Common myeloid progenitor, CD34-positive (primary cell): ENCODE measurements at regions of chr16 and their contacts with region 1.

Region 1: DNA sequence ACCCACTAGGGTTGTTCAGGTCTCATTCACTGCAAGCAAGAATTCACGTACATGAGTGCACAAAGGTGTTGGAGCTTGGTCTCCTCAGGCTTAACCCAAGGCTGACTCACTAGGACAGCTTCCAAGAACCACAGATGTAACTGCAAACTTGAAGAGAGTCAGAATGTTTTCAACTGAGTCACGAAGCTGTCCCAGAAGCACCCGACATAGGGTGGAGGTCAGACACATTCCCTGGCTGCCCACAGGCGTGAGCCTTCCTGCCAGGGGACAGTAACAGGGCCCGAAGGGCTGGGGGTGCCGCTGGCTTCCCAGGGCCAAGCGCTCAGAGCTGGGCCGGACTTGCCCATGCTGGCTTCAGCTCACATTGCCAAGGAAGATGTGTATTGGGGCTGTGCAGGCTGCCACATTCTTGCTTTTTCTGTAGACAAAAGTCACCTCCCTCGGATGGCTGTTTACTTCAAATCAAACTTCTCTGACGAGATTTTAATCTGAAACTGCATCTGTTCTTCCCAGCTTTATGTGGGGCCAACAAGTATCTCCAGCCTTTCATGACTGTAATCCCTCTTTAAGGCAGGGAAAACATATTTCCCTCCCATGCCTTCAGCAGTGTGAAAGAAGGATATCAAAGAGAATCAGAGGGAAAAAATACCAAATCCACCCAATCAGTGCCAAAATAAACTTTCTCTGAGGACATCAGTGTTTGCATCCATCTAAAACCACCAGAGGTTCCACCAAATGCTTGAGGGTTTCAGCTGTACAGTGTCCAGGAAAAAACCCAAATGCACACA is 14.3 kb downstream of the CMTM3 start:
- DNase-seq: no peak
- H3K4me3 ChIP-seq: no peak overlapping the region
- H3K27ac ChIP-seq: no peak overlapping the region
- H3K4me1 ChIP-seq: no peaks in the 10 kb centered on the region
- H3K27me3 ChIP-seq: no peaks in the 10 kb centered on the region

Region 2: DNA sequence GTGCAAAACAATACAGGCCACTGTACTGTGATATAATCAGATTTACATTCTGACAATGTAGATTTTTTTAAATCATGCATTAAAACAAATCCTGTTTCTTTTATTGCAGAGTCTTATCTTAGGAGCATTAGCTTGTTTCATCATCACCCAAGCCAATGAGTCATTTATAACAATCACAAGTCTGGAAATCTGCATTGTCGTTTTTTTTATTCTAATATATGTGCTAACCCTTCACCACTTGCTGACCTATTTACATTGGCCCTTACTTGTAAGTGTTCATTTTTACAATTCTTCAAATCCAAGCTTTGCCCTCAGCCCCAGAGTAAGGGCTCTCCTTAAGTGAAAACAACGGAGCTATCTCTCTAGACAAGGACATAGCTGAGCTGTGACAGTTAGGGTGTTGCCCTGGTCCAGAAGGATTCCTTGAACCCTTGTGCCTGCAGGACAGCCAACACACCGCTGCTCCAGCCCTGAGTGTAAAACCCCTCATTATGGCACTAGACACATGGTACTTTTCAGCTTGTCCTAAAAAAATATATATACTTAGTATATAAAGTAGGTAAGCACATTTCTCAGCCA is 48.9 kb before region 1 on chr16:
- CTCF ChIA-PET with region 1: no interaction called
- POLR2A ChIA-PET with region 1: no interaction called
- DNase-seq: no peak
- H3K4me3 ChIP-seq: no peak overlapping the region
- H3K27ac ChIP-seq: no peak overlapping the region
- H3K4me1 ChIP-seq: peaks cover 9 to 43% (median 25%) of the 10 kb centered on the region in 4 experiments
- H3K27me3 ChIP-seq: no peaks in the 10 kb centered on the region

Region 3: DNA sequence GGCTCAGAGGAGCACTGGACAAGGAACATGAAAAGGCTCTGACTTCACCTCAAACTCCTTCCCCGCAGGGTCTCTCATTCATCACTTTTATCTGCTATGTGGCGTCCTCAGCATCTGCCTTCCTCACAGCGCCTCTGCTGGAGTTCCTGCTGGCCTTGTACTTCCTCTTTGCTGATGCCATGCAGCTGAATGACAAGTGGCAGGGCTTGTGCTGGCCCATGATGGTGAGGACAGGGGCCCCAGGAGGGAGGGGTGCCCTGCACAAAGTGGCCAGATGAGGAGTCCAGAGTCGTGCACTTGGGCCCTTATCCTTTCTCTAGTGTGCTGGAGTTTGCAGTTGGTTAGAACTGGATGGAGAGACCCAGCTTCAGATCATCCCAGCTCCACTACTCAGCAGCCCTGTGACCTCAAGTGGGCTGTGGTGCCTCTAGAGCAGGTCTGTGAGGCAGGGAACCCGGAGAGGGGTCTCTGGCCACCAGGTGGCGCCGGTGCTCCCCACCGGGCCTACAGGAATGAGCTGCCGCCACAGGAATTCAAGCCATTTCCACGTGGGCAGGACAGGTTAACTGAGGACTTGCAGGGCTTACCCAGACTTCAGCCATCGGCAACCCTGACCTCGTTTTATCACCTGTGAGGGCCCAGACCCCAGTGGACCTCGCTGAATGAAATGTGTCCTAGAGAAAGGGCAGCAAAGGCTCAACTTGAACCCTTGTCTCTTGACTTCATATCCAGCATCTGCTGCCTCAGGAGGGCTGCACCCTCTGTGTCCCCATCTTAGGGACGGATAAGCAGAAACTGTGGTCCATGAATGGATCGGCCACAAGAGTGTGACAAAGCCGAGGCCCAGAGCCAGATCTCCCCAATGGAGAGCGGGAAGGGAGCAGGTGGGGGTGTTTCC is 10.3 kb before region 1 on chr16:
- CTCF ChIA-PET with region 1: interaction called, 18 read pairs
- POLR2A ChIA-PET with region 1: no interaction called
- DNase-seq: peak; percentile 87 to 91 (median 91)
- H3K4me3 ChIP-seq: no peak overlapping the region
- H3K27ac ChIP-seq: peak overlapping the region in 1 of 2 experiments; percentile 59
- H3K4me1 ChIP-seq: peaks cover 0 to 44% (median 38%) of the 10 kb centered on the region in 4 experiments
- H3K27me3 ChIP-seq: no peaks in the 10 kb centered on the region